Activated B cell treated with CpG ODN at 0.5 μM for 24 hours (primary cell): ENCODE measurements at regions of chr19 and their contacts with region 1.

Region 1: DNA sequence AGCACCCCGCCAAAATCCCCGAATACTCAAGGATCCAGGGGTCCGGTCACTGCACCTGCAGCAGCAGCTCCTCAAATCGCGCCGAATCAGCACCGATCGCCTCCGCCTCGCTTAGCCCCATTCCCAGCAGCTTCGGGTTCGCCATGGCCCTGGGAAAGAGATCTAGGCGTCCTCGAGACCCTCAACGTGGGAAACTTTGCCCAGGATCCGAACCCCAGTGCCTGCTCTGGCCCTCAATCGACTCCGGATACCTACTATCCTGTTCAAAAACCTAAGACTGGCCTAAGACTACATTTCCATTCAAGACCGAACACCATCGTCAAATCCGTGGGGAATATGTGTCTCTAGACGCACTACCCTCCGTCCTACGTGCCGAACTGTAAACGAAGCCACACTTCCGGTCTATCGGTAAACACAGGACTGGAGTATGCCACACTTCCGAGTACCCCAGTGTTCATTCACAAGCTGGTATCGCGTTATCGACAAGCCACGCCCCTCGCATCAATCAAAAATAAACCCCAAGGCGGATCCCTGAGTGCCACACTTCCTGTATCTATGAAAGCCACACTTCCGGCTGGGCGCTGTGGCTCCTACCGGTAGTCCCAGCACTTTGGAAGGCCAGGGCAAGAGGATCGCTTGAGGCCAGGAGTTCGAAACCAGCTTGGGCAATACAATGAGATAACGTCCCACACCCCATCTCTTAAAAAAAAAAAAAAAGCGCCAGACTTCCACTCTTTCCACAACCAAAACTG is at the start of gene PIH1D1:
- DNase-seq: peak; percentile 79
- ATAC-seq: peak; percentile 60
- H3K4me3 Mint-ChIP-seq: peak within 1 kb of the TSS; percentile 99
- H3K27ac Mint-ChIP-seq: peak within 1 kb of the TSS; percentile 100
- H3K4me1 Mint-ChIP-seq: peaks cover 55% of the 10 kb centered on the region
- H3K27me3 Mint-ChIP-seq: no peaks in the 10 kb centered on the region
- CTCF ChIP-seq: no peak
- total RNA-seq, gene PIH1D1: 110 and 111 TPM in 2 replicates

Region 2: DNA sequence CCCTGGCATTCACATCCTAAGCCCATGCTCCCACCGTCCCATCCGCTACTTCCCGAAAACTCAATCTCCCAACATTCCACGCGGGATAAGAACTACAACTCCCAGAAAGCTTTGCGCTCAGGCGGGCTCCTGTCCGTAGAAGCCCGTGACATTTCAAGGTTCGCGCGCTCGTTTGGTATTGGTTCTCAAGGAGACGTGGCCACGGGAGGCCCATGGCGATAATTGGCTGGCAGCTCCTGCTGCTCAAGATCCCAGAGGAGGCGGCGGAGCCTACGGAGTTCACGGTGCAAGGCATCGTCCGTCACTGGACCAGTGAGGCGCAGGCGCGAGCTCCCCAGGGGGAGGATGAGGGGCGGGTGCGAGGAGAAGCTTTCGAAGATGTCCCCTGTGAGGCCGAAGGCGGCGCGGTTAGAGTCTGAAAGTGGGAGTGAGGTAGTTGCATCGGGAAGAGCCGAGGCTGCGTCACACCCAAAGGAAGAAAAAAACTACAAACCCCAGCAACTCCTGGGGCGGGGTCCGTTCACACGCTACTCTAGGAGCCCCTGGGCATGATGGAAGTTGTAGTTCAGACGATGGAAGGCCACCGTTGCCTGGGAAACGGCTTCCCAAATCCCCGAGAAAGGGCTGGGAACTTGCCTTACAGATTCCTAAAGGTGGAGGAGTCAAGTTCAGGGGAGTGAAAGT is 730.9 kb before region 1 on chr19:
- CTCF ChIA-PET with region 1: no interaction called
- POLR2A ChIA-PET with region 1: no interaction called
- intact Hi-C with region 1: loop called (anchors 10 kb)
- DNase-seq: peak; percentile 81
- ATAC-seq: peak; percentile 86
- H3K4me3 Mint-ChIP-seq: peak overlapping the region; percentile 95
- H3K27ac Mint-ChIP-seq: peak overlapping the region; percentile 92
- H3K4me1 Mint-ChIP-seq: peaks cover 24% of the 10 kb centered on the region
- H3K27me3 Mint-ChIP-seq: no peaks in the 10 kb centered on the region
- CTCF ChIP-seq: no peak

Region 3: DNA sequence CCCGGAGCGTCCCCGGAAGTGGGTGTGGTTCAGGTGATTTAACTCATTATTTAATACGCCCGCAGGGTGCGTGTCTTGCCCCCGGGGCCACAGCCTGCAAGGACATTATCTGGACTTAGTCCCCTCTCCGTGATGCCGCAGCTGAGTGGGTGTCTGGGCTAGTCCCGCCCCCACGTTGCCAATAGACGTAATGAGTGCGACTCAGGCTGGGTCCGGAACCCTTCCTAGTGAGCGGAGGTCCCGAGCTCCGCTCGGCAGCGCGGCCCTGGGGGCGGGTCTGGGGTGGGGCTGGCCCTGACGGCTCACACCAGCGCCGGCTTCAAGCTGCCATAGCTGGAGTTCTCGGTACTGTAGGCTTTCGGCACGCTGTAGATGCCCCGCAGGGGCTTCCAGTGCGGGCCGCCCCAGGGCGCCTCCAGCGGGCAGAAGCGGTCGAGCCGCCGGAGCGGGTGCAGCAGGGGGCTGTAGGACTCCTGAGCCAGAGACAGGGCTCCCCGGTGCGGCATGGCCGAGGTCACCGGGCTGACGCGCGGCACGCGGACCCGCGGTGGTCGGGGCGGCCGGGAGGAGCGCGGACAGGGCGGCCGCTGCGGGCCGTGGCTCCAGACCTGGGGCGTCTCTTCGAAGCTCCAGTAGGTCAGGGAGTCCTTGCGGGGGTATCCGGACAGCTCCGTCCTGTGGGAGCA is 433.8 kb before region 1 on chr19:
- CTCF ChIA-PET with region 1: no interaction called
- POLR2A ChIA-PET with region 1: no interaction called
- intact Hi-C with region 1: loop called (anchors 5 kb)
- DNase-seq: peak; percentile 70
- ATAC-seq: peak; percentile 77
- H3K4me3 Mint-ChIP-seq: peak overlapping the region; percentile 87
- H3K27ac Mint-ChIP-seq: no peak overlapping the region
- H3K4me1 Mint-ChIP-seq: peaks cover 32% of the 10 kb centered on the region
- H3K27me3 Mint-ChIP-seq: peaks cover 3% of the 10 kb centered on the region
- CTCF ChIP-seq: no peak

Region 4: DNA sequence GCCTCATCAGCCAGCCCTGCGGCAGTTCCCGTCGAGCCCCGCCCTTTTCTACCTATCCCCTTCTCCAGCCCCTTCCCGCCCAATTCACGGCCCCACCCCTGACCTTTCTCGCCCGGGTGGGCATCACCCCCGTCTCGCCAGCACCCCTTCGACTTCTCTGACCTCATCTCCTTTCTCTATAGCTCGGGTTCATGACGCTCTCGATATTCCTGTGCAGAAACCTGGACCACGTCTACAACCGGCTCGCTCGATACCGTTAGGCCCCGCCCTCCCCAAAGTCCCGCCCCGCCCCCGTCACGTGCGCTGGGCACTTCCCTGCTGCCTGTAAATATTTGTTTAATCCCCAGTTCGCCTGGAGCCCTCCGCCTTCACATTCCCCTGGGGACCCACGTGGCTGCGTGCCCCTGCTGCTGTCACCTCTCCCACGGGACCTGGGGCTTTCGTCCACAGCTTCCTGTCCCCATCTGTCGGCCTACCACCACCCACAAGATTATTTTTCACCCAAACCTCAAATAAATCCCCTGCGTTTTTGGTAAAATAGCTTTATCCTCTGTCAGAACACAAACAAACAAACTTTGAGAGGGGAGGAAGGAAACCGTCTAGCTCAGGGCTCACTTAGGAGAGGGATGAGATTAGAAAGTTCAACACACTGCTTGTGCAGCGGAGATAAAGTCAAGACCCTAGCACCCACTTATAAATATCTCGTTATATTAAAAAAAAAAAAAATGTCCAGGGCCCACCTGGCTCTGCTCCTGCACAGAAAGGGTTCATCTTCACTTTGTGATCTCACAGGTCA is 111.3 kb before region 1 on chr19:
- CTCF ChIA-PET with region 1: no interaction called
- POLR2A ChIA-PET with region 1: interaction called, 28 read pairs
- intact Hi-C with region 1: loop called (anchors 1 kb)
- DNase-seq: peak; percentile 93
- ATAC-seq: peak; percentile 72
- H3K4me3 Mint-ChIP-seq: peak overlapping the region; percentile 80
- H3K27ac Mint-ChIP-seq: peak overlapping the region; percentile 93
- H3K4me1 Mint-ChIP-seq: peaks cover 83% of the 10 kb centered on the region
- H3K27me3 Mint-ChIP-seq: no peaks in the 10 kb centered on the region
- CTCF ChIP-seq: no peak

Region 5: GRCh38 chr19:49368711-49369358 is 82.8 kb before region 1 on chr19:
- CTCF ChIA-PET with region 1: no interaction called
- POLR2A ChIA-PET with region 1: no interaction called
- intact Hi-C with region 1: no loop called
- DNase-seq: no peak
- ATAC-seq: no peak
- H3K4me3 Mint-ChIP-seq: no peak overlapping the region
- H3K27ac Mint-ChIP-seq: no peak overlapping the region
- H3K4me1 Mint-ChIP-seq: peaks cover 8% of the 10 kb centered on the region
- H3K27me3 Mint-ChIP-seq: no peaks in the 10 kb centered on the region
- CTCF ChIP-seq: no peak

Region 6: DNA sequence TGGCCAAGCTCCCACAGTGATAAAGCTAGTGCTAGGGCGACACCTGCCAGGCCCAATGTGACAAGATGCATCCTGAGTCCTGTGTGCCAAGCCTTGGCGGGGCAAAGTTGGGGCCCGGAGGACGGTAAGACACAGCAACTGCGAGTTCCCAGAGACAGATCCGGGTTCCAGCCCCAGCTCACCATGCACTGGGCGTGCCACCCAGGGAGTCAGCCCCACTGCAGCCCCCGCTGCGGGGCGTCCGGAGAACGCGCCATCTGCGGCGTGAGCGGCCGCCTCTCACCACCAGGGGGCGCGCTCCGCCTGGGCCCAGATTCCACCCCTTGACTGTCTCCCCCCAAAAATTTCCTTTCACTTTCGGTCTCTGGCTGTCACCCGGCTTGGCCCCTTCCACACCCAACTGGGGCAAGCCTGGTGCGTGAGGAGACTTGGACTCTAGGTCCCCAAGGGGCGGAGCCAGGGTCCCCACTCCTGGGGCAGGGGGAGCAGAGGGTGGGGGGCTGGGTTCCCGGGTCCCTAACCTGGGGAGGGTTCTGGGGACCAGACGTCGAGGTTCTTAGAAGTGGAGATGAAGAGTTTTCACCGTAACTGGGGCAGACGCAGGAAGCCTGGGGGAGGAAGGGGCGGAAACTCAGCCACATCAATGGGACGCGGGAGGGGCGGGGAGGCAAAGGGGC is 22.4 kb after region 1 on chr19 and contains the start of gene FLT3LG:
- CTCF ChIA-PET with region 1: interaction called, 14 read pairs
- POLR2A ChIA-PET with region 1: interaction called, 193 read pairs
- intact Hi-C with region 1: loop called (anchors 1 kb)
- DNase-seq: peak; percentile 92
- ATAC-seq: peak; percentile 45
- H3K4me3 Mint-ChIP-seq: peak within 1 kb of the TSS; percentile 92
- H3K27ac Mint-ChIP-seq: peak within 1 kb of the TSS; percentile 91
- H3K4me1 Mint-ChIP-seq: peaks cover 67% of the 10 kb centered on the region
- H3K27me3 Mint-ChIP-seq: no peaks in the 10 kb centered on the region
- CTCF ChIP-seq: peak; percentile 52
- total RNA-seq, gene FLT3LG: 15.4 and 17.7 TPM in 2 replicates

Region 7: GRCh38 chr19:49580264-49581006 is 128.8 kb after region 1 on chr19 and contains the start of gene NOSIP:
- CTCF ChIA-PET with region 1: no interaction called
- POLR2A ChIA-PET with region 1: interaction called, 16 read pairs
- intact Hi-C with region 1: no loop called
- DNase-seq: peak; percentile 87
- ATAC-seq: peak; percentile 98
- H3K4me3 Mint-ChIP-seq: peak within 1 kb of the TSS; percentile 92
- H3K27ac Mint-ChIP-seq: peak within 1 kb of the TSS; percentile 84
- H3K4me1 Mint-ChIP-seq: peaks cover 24% of the 10 kb centered on the region
- H3K27me3 Mint-ChIP-seq: no peaks in the 10 kb centered on the region
- CTCF ChIP-seq: no peak
- total RNA-seq, gene NOSIP: 49.9 and 54.8 TPM in 2 replicates

Region 8: GRCh38 chr19:49665351-49666119 is 213.9 kb after region 1 on chr19 and contains the starts of genes BCL2L12 and IRF3:
- CTCF ChIA-PET with region 1: no interaction called
- POLR2A ChIA-PET with region 1: no interaction called
- intact Hi-C with region 1: loop called (anchors 1 kb)
- DNase-seq: peak; percentile 99
- ATAC-seq: peak; percentile 86
- H3K4me3 Mint-ChIP-seq: peak within 1 kb of the TSS; percentile 98
- H3K27ac Mint-ChIP-seq: peak within 1 kb of the TSS; percentile 95
- H3K4me1 Mint-ChIP-seq: peaks cover 40% of the 10 kb centered on the region
- H3K27me3 Mint-ChIP-seq: no peaks in the 10 kb centered on the region
- CTCF ChIP-seq: no peak
- total RNA-seq, gene BCL2L12: 30.7 and 39.1 TPM in 2 replicates
- total RNA-seq, gene IRF3: 145 and 171 TPM in 2 replicates